ENCODE measurements at regions of chr15 and their contacts with region 1.

Region 1: GRCh38 chr15:51380999-51381795 is 39.7 kb downstream of the GLDN start:
- DNase-seq: peak; percentile 76
- CTCF ChIP-seq: peak; percentile 91

Region 2: GRCh38 chr15:51162865-51163762 is 218.1 kb before region 1 on chr15:
- in situ Hi-C with region 1: loop called (anchors 10 kb)
- DNase-seq: peak; percentile 86
- CTCF ChIP-seq: peak; percentile 93

Region 3: GRCh38 chr15:51443282-51443914 is 62.2 kb after region 1 on chr15:
- in situ Hi-C with region 1: no loop called
- DNase-seq: no peak
- CTCF ChIP-seq: no peak